ENCODE measurements at regions of chr20 and their contacts with region 1.

Region 1: DNA sequence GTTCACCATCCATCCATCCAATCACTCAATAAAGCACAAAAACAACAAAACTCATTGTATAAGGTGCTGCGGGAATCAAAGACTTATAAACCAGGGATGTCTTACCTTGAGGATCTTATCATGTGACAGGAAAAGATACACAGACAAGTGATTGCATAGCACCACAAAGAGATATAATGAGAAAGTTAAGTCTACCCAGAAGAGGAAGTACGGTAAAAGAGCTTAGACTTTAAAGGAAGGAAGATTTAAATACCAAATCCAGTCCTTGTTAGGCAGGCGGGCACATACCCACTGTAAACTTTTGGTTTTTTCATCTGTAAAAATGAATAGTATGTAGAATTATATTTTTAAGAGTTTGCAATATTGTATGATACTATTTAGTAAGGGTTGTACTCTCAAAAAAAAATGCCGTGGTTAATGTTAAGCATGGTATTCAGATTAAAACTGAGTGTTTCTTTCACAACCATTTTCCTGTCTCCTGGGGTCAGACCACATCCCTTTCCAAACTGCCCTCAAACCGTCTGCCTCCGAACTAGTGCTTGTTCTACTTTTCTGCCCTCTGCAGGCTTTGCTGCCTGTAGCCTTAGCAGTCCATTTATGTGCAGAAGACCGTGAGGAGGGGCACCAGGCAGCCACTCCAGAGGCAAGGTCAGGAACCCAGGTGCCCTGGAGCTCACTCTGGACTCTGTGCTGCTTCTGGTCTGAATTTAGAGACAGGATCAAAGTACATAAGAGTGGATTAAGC is 179.5 kb upstream of the SYNDIG1 start:
- DNase-seq: no peak
- ATAC-seq: no peak
- H3K4me3 ChIP-seq: no peak overlapping the region
- H3K27ac ChIP-seq: no peak overlapping the region
- H3K4me1 ChIP-seq: no peaks in the 10 kb centered on the region
- H3K27me3 ChIP-seq: no peaks in the 10 kb centered on the region
- CTCF ChIP-seq: no peak

Region 2: GRCh38 chr20:24235296-24236175 is 54.4 kb before region 1 on chr20:
- intact Hi-C with region 1: loop called in 1 of 2 experiments (anchors 10 kb)
- DNase-seq: no peak
- ATAC-seq: no peak
- H3K4me3 ChIP-seq: no peak overlapping the region
- H3K27ac ChIP-seq: no peak overlapping the region
- H3K4me1 ChIP-seq: no peaks in the 10 kb centered on the region
- H3K27me3 ChIP-seq: no peaks in the 10 kb centered on the region
- CTCF ChIP-seq: no peak

Region 3: GRCh38 chr20:24350923-24351368 is 61.0 kb after region 1 on chr20:
- intact Hi-C with region 1: no loop called
- DNase-seq: peak in 1 of 2 donors; percentile 25
- ATAC-seq: peak in 1 of 4 donors; percentile 33
- H3K4me3 ChIP-seq: no peak overlapping the region
- H3K27ac ChIP-seq: no peak overlapping the region
- H3K4me1 ChIP-seq: no peaks in the 10 kb centered on the region
- H3K27me3 ChIP-seq: no peaks in the 10 kb centered on the region
- CTCF ChIP-seq: no peak

Region 4: DNA sequence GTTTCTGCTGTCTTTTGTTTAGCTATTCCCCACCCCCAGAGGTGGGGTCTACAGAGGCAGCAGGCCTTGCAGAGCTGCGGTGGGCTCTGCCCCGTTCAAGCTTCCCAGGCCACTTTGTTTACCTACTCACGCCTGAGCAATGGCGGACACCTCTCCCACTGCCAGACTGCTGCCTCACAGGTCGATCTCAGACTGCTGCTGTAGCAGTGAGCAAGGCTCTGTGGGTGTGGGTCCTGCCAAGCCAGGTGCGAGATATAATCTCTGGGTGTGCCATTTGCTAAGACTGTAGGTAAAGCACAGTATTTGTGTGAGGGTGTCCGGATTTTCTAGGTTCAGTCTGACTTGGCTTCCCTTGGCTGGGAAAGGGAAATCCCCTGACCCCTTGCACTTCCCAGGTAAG is 1430.4 kb after region 1 on chr20:
- intact Hi-C with region 1: loop called in 1 of 2 experiments (anchors 5 kb)
- DNase-seq: no peak
- ATAC-seq: no peak
- H3K4me3 ChIP-seq: no peak overlapping the region
- H3K27ac ChIP-seq: no peak overlapping the region
- H3K4me1 ChIP-seq: no peaks in the 10 kb centered on the region
- H3K27me3 ChIP-seq: no peaks in the 10 kb centered on the region
- CTCF ChIP-seq: no peak